ENCODE measurements at regions of chr10 and their contacts with region 1.

Region 1: GRCh38 chr10:12181065-12181775 is 14.5 kb downstream of the NUDT5 start:
- DNase-seq: peak; percentile 95
- ATAC-seq: peak; percentile 99
- H3K4me3 Mint-ChIP-seq: peak overlapping the region; percentile 41
- H3K27ac Mint-ChIP-seq: peak overlapping the region; percentile 98
- H3K4me1 Mint-ChIP-seq: peaks cover 50% of the 10 kb centered on the region
- H3K27me3 Mint-ChIP-seq: no peaks in the 10 kb centered on the region

Region 2: GRCh38 chr10:12195603-12196506 is 14.6 kb after region 1 on chr10 and contains the starts of genes CDC123 and NUDT5:
- CTCF ChIA-PET with region 1: interaction called, 12 read pairs
- DNase-seq: peak; percentile 93
- ATAC-seq: peak; percentile 94
- H3K4me3 Mint-ChIP-seq: peak within 1 kb of the TSS; percentile 97
- H3K27ac Mint-ChIP-seq: peak within 1 kb of the TSS; percentile 92
- H3K4me1 Mint-ChIP-seq: peaks cover 57% of the 10 kb centered on the region
- H3K27me3 Mint-ChIP-seq: no peaks in the 10 kb centered on the region
- total RNA-seq, gene CDC123: 95.2 to 130 TPM
- total RNA-seq, gene NUDT5: 107 to 125 TPM

Measured in activated CD8-positive, alpha-beta memory T cell treated with anti-CD3 and anti-CD28 coated beads, Interleukin-2, amount 10 ng/mL, durations not matched to agents 7 days and 5 days (primary cell).